ENCODE measurements at regions of chr5 and their contacts with region 1.

Region 1: GRCh38 chr5:31193591-31194467 is at the start of gene CDH6:
- DNase-seq: peak; percentile 70 to 75
- H3K4me3 ChIP-seq: peak within 1 kb of the TSS; percentile 61
- H3K4me3 Mint-ChIP-seq: peak within 1 kb of the TSS; percentile 74
- H3K27ac Mint-ChIP-seq: peak within 1 kb of the TSS; percentile 19
- H3K4me1 ChIP-seq: peaks cover 17% of the 10 kb centered on the region
- H3K4me1 Mint-ChIP-seq: peaks cover 41% of the 10 kb centered on the region
- H3K27me3 ChIP-seq: no peaks in the 10 kb centered on the region
- H3K27me3 Mint-ChIP-seq: no peaks in the 10 kb centered on the region
- CTCF ChIP-seq: no peak
- total RNA-seq, gene CDH6: 16.0 and 18.0 TPM in 2 replicates

Region 2: GRCh38 chr5:31021181-31021624 is 172.6 kb before region 1 on chr5:
- CTCF ChIA-PET with region 1: no interaction called
- POLR2A ChIA-PET with region 1: no interaction called
- intact Hi-C with region 1: loop called (anchors 2 kb)
- DNase-seq: peak; percentile 49 to 53
- H3K4me3 ChIP-seq: no peak overlapping the region
- H3K4me3 Mint-ChIP-seq: no peak overlapping the region
- H3K27ac Mint-ChIP-seq: peak overlapping the region; percentile 68
- H3K4me1 ChIP-seq: peaks cover 44% of the 10 kb centered on the region
- H3K4me1 Mint-ChIP-seq: peaks cover 10% of the 10 kb centered on the region
- H3K27me3 ChIP-seq: no peaks in the 10 kb centered on the region
- H3K27me3 Mint-ChIP-seq: no peaks in the 10 kb centered on the region
- CTCF ChIP-seq: no peak

Region 3: GRCh38 chr5:31106691-31107546 is 86.9 kb before region 1 on chr5:
- CTCF ChIA-PET with region 1: no interaction called
- POLR2A ChIA-PET with region 1: no interaction called
- intact Hi-C with region 1: loop called (anchors 5 kb)
- DNase-seq: peak in 1 of 2 experiments; percentile 8
- H3K4me3 ChIP-seq: no peak overlapping the region
- H3K4me3 Mint-ChIP-seq: peak overlapping the region; percentile 12
- H3K27ac Mint-ChIP-seq: peak overlapping the region; percentile 85
- H3K4me1 ChIP-seq: peaks cover 26% of the 10 kb centered on the region
- H3K4me1 Mint-ChIP-seq: peaks cover 23% of the 10 kb centered on the region
- H3K27me3 ChIP-seq: no peaks in the 10 kb centered on the region
- H3K27me3 Mint-ChIP-seq: no peaks in the 10 kb centered on the region
- CTCF ChIP-seq: no peak

Region 4: GRCh38 chr5:31156631-31157160 is 37.1 kb before region 1 on chr5:
- CTCF ChIA-PET with region 1: no interaction called
- POLR2A ChIA-PET with region 1: no interaction called
- intact Hi-C with region 1: no loop called
- DNase-seq: no peak
- H3K4me3 ChIP-seq: no peak overlapping the region
- H3K4me3 Mint-ChIP-seq: no peak overlapping the region
- H3K27ac Mint-ChIP-seq: no peak overlapping the region
- H3K4me1 ChIP-seq: peaks cover 30% of the 10 kb centered on the region
- H3K4me1 Mint-ChIP-seq: peaks cover 20% of the 10 kb centered on the region
- H3K27me3 ChIP-seq: no peaks in the 10 kb centered on the region
- H3K27me3 Mint-ChIP-seq: no peaks in the 10 kb centered on the region
- CTCF ChIP-seq: no peak

Region 5: GRCh38 chr5:31213705-31214121 is 19.9 kb after region 1 on chr5:
- CTCF ChIA-PET with region 1: interaction called, 3 read pairs
- POLR2A ChIA-PET with region 1: interaction called, 6 read pairs
- intact Hi-C with region 1: loop called (anchors 1 kb)
- DNase-seq: peak; percentile 77 to 81
- H3K4me3 ChIP-seq: peak overlapping the region; percentile 28
- H3K4me3 Mint-ChIP-seq: peak overlapping the region; percentile 87
- H3K27ac Mint-ChIP-seq: peak overlapping the region; percentile 97
- H3K4me1 ChIP-seq: peaks cover 61% of the 10 kb centered on the region
- H3K4me1 Mint-ChIP-seq: peaks cover 19% of the 10 kb centered on the region
- H3K27me3 ChIP-seq: no peaks in the 10 kb centered on the region
- H3K27me3 Mint-ChIP-seq: no peaks in the 10 kb centered on the region
- CTCF ChIP-seq: peak in 1 of 2 experiments; percentile 12

Region 6: DNA sequence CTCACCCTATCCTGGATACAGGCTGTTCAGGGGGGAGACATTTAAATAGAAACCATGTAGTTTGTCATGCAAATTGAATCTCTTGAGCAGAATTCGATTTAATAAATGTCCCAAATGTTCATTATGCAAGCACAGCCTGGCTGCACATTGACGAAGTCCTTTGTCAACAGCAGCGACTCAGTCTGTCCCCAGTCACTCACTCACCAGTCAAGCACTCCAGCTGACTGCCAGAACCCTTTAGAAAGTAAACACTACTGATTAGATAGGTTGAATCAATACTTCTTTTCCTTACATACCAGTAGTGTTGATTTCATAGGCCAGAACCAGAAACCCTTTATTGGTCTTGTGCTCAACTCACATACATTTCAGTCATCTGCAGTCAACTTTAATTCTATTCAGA is 27.2 kb after region 1 on chr5:
- CTCF ChIA-PET with region 1: no interaction called
- POLR2A ChIA-PET with region 1: no interaction called
- intact Hi-C with region 1: loop called (anchors 1 kb)
- DNase-seq: peak; percentile 70 to 81
- H3K4me3 ChIP-seq: no peak overlapping the region
- H3K4me3 Mint-ChIP-seq: peak overlapping the region; percentile 36
- H3K27ac Mint-ChIP-seq: peak overlapping the region; percentile 80
- H3K4me1 ChIP-seq: peaks cover 65% of the 10 kb centered on the region
- H3K4me1 Mint-ChIP-seq: peaks cover 37% of the 10 kb centered on the region
- H3K27me3 ChIP-seq: no peaks in the 10 kb centered on the region
- H3K27me3 Mint-ChIP-seq: no peaks in the 10 kb centered on the region
- CTCF ChIP-seq: no peak